Activated naive CD4-positive, alpha-beta T cell treated with anti-CD3 and anti-CD28 coated beads for 36 hours (primary cell): ENCODE measurements at regions of chr1 and their contacts with region 1.

Region 1: GRCh38 chr1:169367486-169368405 is at the starts of genes BLZF1 and NME7:
- DNase-seq: peak; percentile 99
- H3K4me3 Mint-ChIP-seq: peak within 1 kb of the TSS; percentile 50
- H3K27ac Mint-ChIP-seq: no peak within 1 kb of the TSS
- H3K4me1 Mint-ChIP-seq: peaks cover 30% of the 10 kb centered on the region
- H3K27me3 Mint-ChIP-seq: no peaks in the 10 kb centered on the region
- total RNA-seq, gene BLZF1: 5.6 to 6.0 TPM
- total RNA-seq, gene NME7: 7.1 to 8.5 TPM

Region 2: DNA sequence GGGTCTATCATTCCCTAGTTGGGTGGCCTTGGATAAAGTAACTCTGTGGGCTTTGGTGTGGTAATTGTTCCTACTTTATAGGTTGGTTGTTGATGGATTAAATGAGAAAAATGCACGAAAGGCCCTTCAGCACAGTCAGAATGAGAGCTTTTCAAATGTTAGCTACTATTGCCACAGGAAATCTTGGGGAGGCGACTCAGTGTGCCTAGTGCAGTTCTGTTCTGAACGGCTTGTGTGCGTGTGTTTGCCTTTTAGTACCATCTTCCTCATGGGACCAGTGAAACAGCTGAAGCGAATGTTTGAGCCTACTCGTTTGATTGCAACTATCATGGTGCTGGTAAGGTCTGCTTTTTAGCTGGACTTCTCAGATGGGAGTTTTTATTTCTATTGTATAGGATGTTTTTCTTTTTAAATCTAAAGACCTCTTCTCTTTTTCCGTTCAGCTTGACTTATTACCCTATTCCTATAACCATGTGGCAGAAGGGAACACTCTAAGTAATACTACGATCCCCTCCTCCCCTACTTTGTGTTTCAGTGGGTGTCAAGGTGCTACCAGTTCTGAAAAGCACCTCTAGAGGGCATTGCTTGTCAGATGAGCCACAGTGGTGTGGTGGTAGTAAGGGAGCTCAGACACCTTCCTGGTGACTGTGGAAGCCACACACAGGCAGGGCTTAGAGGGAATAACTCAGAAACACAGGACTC is 1132.7 kb before region 1 on chr1:
- CTCF ChIA-PET with region 1: no interaction called
- intact Hi-C with region 1: loop called (anchors 5 kb)
- DNase-seq: peak; percentile 53
- H3K4me3 Mint-ChIP-seq: no peak overlapping the region
- H3K27ac Mint-ChIP-seq: peak overlapping the region; percentile 48
- H3K4me1 Mint-ChIP-seq: peaks cover 41% of the 10 kb centered on the region
- H3K27me3 Mint-ChIP-seq: no peaks in the 10 kb centered on the region

Region 3: GRCh38 chr1:168273575-168273974 is 1094.2 kb before region 1 on chr1:
- CTCF ChIA-PET with region 1: no interaction called
- intact Hi-C with region 1: no loop called
- DNase-seq: no peak
- H3K4me3 Mint-ChIP-seq: no peak overlapping the region
- H3K27ac Mint-ChIP-seq: no peak overlapping the region
- H3K4me1 Mint-ChIP-seq: no peaks in the 10 kb centered on the region
- H3K27me3 Mint-ChIP-seq: no peaks in the 10 kb centered on the region

Region 4: GRCh38 chr1:169106095-169106920 is 261.4 kb before region 1 on chr1 and contains the start of gene ATP1B1:
- CTCF ChIA-PET with region 1: no interaction called
- intact Hi-C with region 1: loop called (anchors 1 kb)
- DNase-seq: peak; percentile 78
- H3K4me3 Mint-ChIP-seq: peak within 1 kb of the TSS; percentile 77
- H3K27ac Mint-ChIP-seq: peak within 1 kb of the TSS; percentile 16
- H3K4me1 Mint-ChIP-seq: peaks cover 43% of the 10 kb centered on the region
- H3K27me3 Mint-ChIP-seq: peaks cover 15% of the 10 kb centered on the region
- total RNA-seq, gene ATP1B1: 5.6 to 6.2 TPM

Region 5: GRCh38 chr1:169383449-169383848 is 15.7 kb after region 1 on chr1:
- CTCF ChIA-PET with region 1: no interaction called
- intact Hi-C with region 1: no loop called
- DNase-seq: no peak
- H3K4me3 Mint-ChIP-seq: no peak overlapping the region
- H3K27ac Mint-ChIP-seq: no peak overlapping the region
- H3K4me1 Mint-ChIP-seq: no peaks in the 10 kb centered on the region
- H3K27me3 Mint-ChIP-seq: no peaks in the 10 kb centered on the region

Region 6: GRCh38 chr1:169460191-169460833 is 92.6 kb after region 1 on chr1:
- CTCF ChIA-PET with region 1: no interaction called
- intact Hi-C with region 1: loop called (anchors 1 kb)
- DNase-seq: peak; percentile 24
- H3K4me3 Mint-ChIP-seq: peak overlapping the region; percentile 49
- H3K27ac Mint-ChIP-seq: no peak overlapping the region
- H3K4me1 Mint-ChIP-seq: peaks cover 25% of the 10 kb centered on the region
- H3K27me3 Mint-ChIP-seq: peaks cover 11% of the 10 kb centered on the region

Region 7: DNA sequence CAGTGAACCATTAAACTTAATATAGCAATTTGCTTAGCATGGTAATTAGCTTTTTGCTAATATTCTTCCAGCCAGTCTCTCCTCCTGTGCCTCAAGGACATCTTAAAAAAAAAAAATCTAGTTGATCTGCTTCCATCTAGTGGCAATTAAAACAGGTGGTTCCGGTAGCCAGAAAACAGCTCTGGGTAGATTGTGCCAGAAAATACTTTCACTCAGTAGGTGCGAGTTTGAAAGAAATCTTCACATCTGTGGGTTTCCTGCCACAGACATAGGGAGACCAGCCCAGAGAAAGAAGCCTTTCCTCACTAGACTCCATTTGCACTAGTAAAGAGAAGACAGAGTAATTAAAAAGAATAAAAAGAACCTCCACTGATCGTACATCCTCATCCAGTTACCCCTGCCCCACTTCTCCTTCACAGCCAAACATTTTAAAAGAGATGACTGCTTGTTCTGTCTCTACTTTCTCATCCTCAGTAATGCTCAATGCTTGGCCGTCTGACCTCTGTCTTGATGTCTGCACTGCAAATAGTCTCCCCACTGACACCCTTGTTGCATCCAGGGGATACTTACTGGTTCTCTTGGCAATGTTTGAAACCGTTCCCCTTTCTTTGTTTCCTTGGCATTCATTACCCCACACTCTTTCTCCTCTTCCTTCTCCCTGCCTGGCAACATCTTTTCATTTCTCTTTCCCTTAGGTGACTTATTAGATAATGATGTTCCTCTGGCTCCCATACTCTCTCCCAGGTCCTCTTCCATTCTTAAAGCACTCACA is 326.7 kb after region 1 on chr1:
- CTCF ChIA-PET with region 1: no interaction called
- intact Hi-C with region 1: loop called (anchors 5 kb)
- DNase-seq: peak; percentile 59
- H3K4me3 Mint-ChIP-seq: peak overlapping the region; percentile 32
- H3K27ac Mint-ChIP-seq: peak overlapping the region; percentile 94
- H3K4me1 Mint-ChIP-seq: peaks cover 96% of the 10 kb centered on the region
- H3K27me3 Mint-ChIP-seq: no peaks in the 10 kb centered on the region

Region 8: DNA sequence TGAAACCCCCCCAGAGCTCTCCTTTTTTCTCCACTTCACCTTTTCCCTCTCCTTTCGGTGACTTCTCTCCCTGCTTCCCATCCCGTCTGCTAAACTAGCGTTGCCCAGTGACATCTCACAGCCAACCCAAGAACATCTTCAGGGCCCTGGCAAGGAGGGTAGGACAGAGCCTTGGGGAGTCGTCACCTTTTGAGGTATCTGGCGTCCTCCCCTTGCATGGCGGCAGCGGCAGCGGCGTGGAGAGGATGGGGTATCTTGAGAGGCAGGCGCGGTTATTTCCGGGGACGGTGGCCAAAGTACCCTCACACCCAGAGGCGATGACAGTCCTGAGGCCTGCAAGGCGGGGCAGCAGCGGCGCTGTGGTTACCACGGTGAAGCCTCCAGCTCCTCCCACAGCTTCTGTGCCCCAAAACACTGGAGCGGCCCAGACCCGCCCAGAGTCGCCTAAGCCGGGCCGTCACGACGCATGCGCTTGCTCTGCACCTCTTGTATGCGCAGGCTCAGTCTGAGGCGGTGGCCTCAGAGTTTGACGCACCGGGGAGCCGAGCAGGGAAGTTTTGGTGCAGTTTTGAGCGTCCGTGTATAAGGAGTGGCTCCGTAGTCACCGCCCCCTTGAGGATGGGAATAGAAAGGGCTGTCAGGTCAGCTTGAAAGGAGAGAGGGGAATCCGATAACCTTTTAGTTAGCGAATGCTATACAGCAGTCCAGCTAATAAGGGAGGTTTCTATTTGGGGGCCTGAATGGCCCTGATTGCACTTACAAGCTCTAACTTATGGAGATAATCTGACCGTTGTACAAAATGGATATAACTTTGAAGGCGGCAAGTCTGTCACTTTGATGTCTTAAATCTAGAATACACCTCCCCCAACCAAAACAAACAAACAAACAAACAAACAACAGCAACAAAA is 706.8 kb after region 1 on chr1 and contains the start of gene KIFAP3:
- CTCF ChIA-PET with region 1: no interaction called
- intact Hi-C with region 1: loop called (anchors 1 kb)
- DNase-seq: peak; percentile 98
- H3K4me3 Mint-ChIP-seq: peak within 1 kb of the TSS; percentile 92
- H3K27ac Mint-ChIP-seq: peak within 1 kb of the TSS; percentile 74
- H3K4me1 Mint-ChIP-seq: peaks cover 48% of the 10 kb centered on the region
- H3K27me3 Mint-ChIP-seq: no peaks in the 10 kb centered on the region
- total RNA-seq, gene KIFAP3: 8.7 to 8.8 TPM

Region 9: DNA sequence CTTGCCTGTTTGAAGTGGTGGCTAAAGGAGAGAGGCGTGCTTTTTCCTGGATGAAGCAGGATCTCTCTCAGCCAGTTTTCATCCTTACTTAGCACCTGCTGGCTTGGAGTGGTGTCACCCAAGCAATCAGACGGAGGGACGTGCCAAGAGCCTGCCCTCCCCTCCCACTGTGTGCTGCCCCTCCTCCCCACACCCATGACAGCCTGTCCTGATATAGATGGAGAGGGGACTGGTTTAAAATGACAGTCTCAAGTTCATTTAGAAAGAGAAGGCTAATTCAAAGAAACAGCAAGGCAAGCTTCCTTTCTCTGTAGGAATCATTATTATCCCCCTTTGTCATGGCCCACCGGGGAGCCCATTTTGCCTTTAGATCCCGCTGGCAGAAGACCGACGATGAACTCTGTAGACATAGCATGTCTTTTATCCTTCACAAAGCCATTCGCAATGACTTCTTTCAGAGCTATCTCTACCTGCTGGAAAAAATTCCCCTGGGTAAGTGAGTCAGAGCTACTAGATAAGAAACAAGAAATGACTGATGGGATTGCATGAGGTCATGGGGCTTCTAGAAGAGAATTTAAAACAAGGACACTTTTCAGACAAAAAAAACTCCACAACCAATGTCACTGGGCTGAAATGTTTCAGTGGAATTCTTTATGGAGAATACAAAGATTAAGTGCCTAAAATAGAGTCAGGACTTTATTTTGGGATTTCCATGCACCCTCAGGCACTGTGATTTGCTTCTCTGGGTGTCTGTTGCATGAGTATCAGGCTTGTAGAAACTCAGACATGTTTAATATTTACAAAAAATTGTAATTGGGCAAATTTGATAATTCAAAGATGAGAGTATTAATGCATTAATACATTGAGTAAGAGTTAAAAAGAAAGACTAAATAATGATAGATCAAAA is 778.3 kb after region 1 on chr1 and contains the start of gene NTMT2:
- CTCF ChIA-PET with region 1: no interaction called
- intact Hi-C with region 1: no loop called
- DNase-seq: peak; percentile 9
- H3K4me3 Mint-ChIP-seq: no peak within 1 kb of the TSS
- H3K27ac Mint-ChIP-seq: no peak within 1 kb of the TSS
- H3K4me1 Mint-ChIP-seq: peaks cover 19% of the 10 kb centered on the region
- H3K27me3 Mint-ChIP-seq: peaks cover 3% of the 10 kb centered on the region
- total RNA-seq, gene NTMT2: not detected